PC-3 (cell line): ENCODE measurements at regions of chr11 and their contacts with region 1.

Region 1: GRCh38 chr11:59106363-59107336 is at the start of gene FAM111B:
- DNase-seq: peak; percentile 98
- ATAC-seq: peak; percentile 93
- H3K4me3 ChIP-seq: peak within 1 kb of the TSS; percentile 68
- H3K27ac ChIP-seq: no peak within 1 kb of the TSS; the same call in 1 of the 2 replicates
- H3K4me1 ChIP-seq: peaks cover 23% of the 10 kb centered on the region
- H3K27me3 ChIP-seq: no peaks in the 10 kb centered on the region
- CTCF ChIP-seq: no peak
- total RNA-seq, gene FAM111B: 22.5 and 26.7 TPM in 2 replicates

Region 2: DNA sequence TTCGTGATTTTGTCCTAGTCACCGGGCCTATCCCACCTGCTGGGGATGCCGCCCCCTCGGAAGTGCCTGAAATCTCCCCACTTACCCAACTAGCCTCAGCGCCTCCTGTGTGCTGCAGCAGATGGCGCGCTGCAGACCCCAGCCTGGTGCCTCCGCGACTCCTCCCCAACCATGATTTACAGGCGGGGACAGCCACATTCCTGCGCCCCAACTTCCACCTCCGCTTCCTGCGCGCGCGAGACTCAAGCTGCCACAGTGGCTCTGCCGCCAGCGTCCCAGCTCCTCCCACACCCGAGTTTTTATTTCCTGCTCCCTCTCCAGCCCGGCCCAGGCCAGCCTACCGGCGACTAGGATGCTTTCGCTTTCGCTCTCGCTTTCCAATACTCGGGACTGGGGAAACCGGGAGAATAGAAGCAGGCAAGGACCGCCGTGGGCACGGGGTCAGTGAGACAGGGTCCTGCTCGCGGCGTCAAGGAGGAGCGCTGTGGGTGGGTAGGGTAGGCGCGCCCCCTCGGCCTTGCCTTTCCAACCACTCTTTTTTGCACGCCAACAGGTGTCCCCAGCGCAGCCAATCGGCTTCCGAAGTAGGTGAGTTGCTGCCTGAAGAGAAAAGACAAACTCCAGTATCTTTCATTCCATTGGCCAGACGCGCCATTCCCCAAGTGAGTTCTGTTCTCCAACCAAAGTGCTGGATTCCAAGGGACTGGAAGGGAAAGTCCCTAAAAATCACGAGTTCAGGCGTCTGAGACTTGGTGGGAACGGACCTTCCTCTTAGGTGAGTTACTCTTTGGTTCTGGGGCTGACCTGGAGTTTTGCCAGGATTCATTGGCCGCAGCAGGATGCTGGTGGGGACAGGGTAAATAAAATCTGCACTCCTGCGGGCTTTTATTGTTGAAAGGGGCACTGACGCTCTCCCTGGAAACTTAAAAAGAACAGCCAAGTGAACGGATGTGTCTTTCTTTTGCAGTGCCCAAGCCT is 36.2 kb after region 1 on chr11 and contains the start of gene FAM111A:
- CTCF ChIA-PET with region 1: no interaction called
- POLR2A ChIA-PET with region 1: interaction called, 3 read pairs
- intact Hi-C with region 1: loop called (anchors 1 kb)
- DNase-seq: peak; percentile 96
- ATAC-seq: peak; percentile 77
- H3K4me3 ChIP-seq: peak within 1 kb of the TSS; percentile 79
- H3K27ac ChIP-seq: peak within 1 kb of the TSS; percentile 68
- H3K4me1 ChIP-seq: peaks cover 38% of the 10 kb centered on the region
- H3K27me3 ChIP-seq: no peaks in the 10 kb centered on the region
- CTCF ChIP-seq: peak; percentile 49
- total RNA-seq, gene FAM111A: 38.9 and 49.2 TPM in 2 replicates